ENCODE measurements at regions of chr17 and their contacts with region 1.

Region 1: DNA sequence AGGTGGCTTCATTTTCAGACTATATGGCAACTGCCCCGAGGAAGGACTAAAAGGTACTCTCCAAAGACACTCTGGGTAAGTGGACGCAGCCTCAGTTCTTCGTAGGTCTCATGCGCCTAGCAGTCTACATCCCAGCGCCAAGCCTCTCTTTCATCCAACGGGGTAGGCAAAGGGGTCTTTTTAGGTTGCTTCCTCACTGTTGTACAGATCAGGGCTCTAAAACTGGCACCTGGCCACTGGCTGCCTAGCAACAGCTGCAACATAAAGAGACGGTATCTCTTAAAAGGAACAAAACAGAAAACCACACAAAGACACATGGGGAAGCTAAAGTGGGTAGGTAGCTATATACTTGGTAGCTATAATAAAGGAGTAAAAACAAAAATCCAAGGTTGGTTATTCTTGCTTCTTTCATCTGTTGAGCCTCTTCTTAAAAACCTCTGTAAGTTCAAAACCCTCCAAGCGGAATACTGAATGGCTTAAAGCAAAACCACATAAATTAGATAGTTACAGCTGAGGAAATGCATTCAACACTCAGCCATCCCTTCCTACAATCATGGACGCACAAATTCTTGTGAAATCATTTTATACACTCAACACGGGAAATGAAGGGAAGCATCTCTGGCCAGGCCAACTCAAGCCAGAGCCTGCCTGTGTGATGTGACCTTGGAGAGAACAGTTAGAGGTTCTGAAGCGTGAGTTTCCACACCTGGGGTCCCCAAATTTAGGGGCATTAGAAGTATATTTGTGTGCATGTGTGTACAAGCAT is 22.7 kb downstream of the CYTH1 start:
- DNase-seq: peak; percentile 72 to 94 (median 82)
- ATAC-seq: peak; percentile 80
- H3K4me3 ChIP-seq: peak overlapping the region; percentile 32
- H3K4me3 Mint-ChIP-seq: peak overlapping the region; percentile 73
- H3K27ac ChIP-seq: peak overlapping the region; percentile 94 to 95
- H3K27ac Mint-ChIP-seq: peak overlapping the region; percentile 87
- H3K4me1 ChIP-seq: peaks cover 92% of the 10 kb centered on the region
- H3K4me1 Mint-ChIP-seq: peaks cover 85% of the 10 kb centered on the region
- H3K27me3 ChIP-seq: no peaks in the 10 kb centered on the region
- H3K27me3 Mint-ChIP-seq: no peaks in the 10 kb centered on the region
- CTCF ChIP-seq: no peak

Region 2: DNA sequence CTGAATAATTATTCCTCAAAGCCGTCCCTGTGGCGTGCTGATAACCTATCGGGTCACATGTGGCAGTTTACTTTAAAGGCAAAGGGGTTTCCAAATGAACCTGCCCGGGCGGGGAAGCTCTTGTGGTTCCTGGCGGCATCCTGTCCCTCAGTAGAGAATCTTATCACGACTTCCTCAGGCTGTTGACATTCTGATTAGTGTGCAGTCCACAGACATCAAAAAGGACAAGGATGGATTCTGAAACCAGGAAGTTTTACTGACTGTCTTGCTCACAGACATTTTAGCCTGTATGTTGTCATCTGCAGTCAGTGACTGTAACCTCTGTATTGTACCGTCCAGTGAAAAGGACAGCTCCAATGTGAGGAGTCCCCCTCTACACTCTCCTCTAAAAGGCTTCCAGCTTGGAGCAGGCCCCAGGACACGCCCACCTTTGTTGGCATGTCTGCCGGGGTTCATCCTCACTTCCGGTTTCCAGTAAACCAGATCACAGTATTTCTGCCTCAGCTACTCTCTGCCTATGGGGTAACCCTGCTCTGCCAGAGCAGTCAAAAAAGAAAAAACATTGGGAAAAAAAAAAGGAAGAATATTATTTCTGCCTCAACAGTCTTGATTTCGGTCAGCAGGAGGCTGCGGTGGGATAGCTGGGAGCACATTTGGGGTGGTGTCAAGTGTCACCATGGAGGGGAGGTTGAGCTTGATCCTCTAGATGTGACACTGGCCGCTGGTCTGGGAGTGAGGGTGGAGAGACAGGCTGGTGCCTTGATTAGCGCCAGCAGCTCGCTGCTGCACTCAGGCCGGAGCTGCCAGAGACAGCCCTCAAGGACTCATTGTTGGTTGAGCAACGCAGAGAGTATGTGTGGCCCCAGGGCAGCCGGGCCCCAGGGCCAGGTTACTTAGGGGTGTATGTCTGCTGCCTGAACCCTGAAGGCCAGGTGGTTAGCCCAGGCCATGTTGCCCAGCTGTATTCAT is 93.2 kb before region 1 on chr17:
- CTCF ChIA-PET with region 1: no interaction called
- POLR2A ChIA-PET with region 1: no interaction called
- intact Hi-C with region 1: no loop called
- DNase-seq: peak; percentile 28 to 84 (median 46)
- ATAC-seq: peak; percentile 85
- H3K4me3 ChIP-seq: peak overlapping the region; percentile 0
- H3K4me3 Mint-ChIP-seq: peak overlapping the region; percentile 73
- H3K27ac ChIP-seq: peak overlapping the region; percentile 14
- H3K27ac Mint-ChIP-seq: peak overlapping the region; percentile 91
- H3K4me1 ChIP-seq: peaks cover 38% of the 10 kb centered on the region
- H3K4me1 Mint-ChIP-seq: peaks cover 39% of the 10 kb centered on the region
- H3K27me3 ChIP-seq: no peaks in the 10 kb centered on the region
- H3K27me3 Mint-ChIP-seq: no peaks in the 10 kb centered on the region
- CTCF ChIP-seq: no peak

Region 3: GRCh38 chr17:78689029-78689428 is 70.4 kb before region 1 on chr17:
- CTCF ChIA-PET with region 1: no interaction called
- POLR2A ChIA-PET with region 1: no interaction called
- intact Hi-C with region 1: no loop called
- DNase-seq: peak in 2 of 14 experiments; percentile 34 to 37
- ATAC-seq: peak; percentile 61
- H3K4me3 ChIP-seq: no peak overlapping the region
- H3K4me3 Mint-ChIP-seq: peak overlapping the region; percentile 54
- H3K27ac ChIP-seq: no peak overlapping the region
- H3K27ac Mint-ChIP-seq: peak overlapping the region; percentile 71
- H3K4me1 ChIP-seq: no peaks in the 10 kb centered on the region
- H3K4me1 Mint-ChIP-seq: peaks cover 7% of the 10 kb centered on the region
- H3K27me3 ChIP-seq: no peaks in the 10 kb centered on the region
- H3K27me3 Mint-ChIP-seq: no peaks in the 10 kb centered on the region
- CTCF ChIP-seq: no peak

Region 4: DNA sequence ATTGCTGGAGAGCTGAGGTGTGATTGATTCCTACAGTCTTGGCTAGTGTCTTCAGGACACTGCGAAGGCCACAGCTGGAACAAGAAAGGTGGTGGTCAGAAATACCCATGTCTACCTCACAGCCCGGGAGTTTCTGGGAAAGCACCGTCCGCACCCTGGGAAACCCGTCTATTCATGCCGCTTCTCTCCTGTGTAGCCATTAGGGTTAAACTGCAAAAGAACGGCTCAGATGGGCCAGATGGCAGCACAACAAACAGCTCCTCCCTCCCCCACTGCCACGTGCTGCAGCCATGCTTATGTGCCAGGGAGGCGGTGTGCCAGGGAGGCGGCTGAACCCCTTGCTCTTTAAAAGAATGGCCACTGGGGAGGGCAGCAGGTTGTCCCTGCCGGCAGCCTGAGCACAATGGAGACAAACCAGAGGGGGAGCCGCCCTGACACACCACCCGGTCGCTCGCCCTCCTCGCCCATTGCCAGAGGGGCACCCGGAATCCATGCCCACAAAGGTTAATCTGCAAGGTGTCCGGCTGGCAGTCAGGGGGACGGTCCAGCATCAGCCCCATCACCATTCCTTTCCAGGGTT is 42.5 kb before region 1 on chr17:
- CTCF ChIA-PET with region 1: interaction called, 3 read pairs
- POLR2A ChIA-PET with region 1: interaction called, 4 read pairs
- intact Hi-C with region 1: loop called in 1 of 2 experiments (anchors 5 kb)
- DNase-seq: peak in 5 of 14 experiments; percentile 32 to 66 (median 50)
- ATAC-seq: peak; percentile 65
- H3K4me3 ChIP-seq: peak overlapping the region; percentile 29
- H3K4me3 Mint-ChIP-seq: peak overlapping the region; percentile 65
- H3K27ac ChIP-seq: peak overlapping the region in 1 of 2 donors; percentile 42
- H3K27ac Mint-ChIP-seq: peak overlapping the region; percentile 76
- H3K4me1 ChIP-seq: peaks cover 89% of the 10 kb centered on the region
- H3K4me1 Mint-ChIP-seq: peaks cover 92% of the 10 kb centered on the region
- H3K27me3 ChIP-seq: no peaks in the 10 kb centered on the region
- H3K27me3 Mint-ChIP-seq: no peaks in the 10 kb centered on the region
- CTCF ChIP-seq: no peak

Region 5: GRCh38 chr17:78774956-78775571 is 15.7 kb after region 1 on chr17:
- CTCF ChIA-PET with region 1: interaction called, 9 read pairs
- POLR2A ChIA-PET with region 1: interaction called, 106 read pairs
- intact Hi-C with region 1: loop called (anchors 2 kb)
- DNase-seq: peak; percentile 39 to 84 (median 54)
- ATAC-seq: peak; percentile 37
- H3K4me3 ChIP-seq: peak overlapping the region; percentile 66
- H3K4me3 Mint-ChIP-seq: peak overlapping the region; percentile 90
- H3K27ac ChIP-seq: peak overlapping the region; percentile 85 to 86
- H3K27ac Mint-ChIP-seq: peak overlapping the region; percentile 95
- H3K4me1 ChIP-seq: peaks cover 89% of the 10 kb centered on the region
- H3K4me1 Mint-ChIP-seq: peaks cover 67% of the 10 kb centered on the region
- H3K27me3 ChIP-seq: no peaks in the 10 kb centered on the region
- H3K27me3 Mint-ChIP-seq: no peaks in the 10 kb centered on the region
- CTCF ChIP-seq: no peak

Region 6: GRCh38 chr17:78818932-78819331 is 59.5 kb after region 1 on chr17:
- CTCF ChIA-PET with region 1: no interaction called
- POLR2A ChIA-PET with region 1: interaction called, 17 read pairs
- intact Hi-C with region 1: no loop called
- DNase-seq: peak in 13 of 14 experiments; percentile 40 to 88 (median 62)
- ATAC-seq: peak; percentile 59
- H3K4me3 ChIP-seq: peak overlapping the region; percentile 3
- H3K4me3 Mint-ChIP-seq: peak overlapping the region; percentile 71
- H3K27ac ChIP-seq: peak overlapping the region; percentile 76 to 79
- H3K27ac Mint-ChIP-seq: peak overlapping the region; percentile 91
- H3K4me1 ChIP-seq: peaks cover 59% of the 10 kb centered on the region
- H3K4me1 Mint-ChIP-seq: peaks cover 66% of the 10 kb centered on the region
- H3K27me3 ChIP-seq: no peaks in the 10 kb centered on the region
- H3K27me3 Mint-ChIP-seq: no peaks in the 10 kb centered on the region
- CTCF ChIP-seq: no peak

Measured in CD4-positive, alpha-beta T cell (primary cell).